A673 (cell line): ENCODE measurements at regions of chr18 and their contacts with region 1.

Region 1: GRCh38 chr18:857986-858385 is 45.9 kb upstream of the YES1 start:
- DNase-seq: no peak
- H3K4me3 ChIP-seq: no peak overlapping the region
- H3K27ac ChIP-seq: no peak overlapping the region
- H3K4me1 ChIP-seq: no peaks in the 10 kb centered on the region
- H3K27me3 ChIP-seq: peaks cover 24% of the 10 kb centered on the region
- CTCF ChIP-seq: no peak

Region 2: DNA sequence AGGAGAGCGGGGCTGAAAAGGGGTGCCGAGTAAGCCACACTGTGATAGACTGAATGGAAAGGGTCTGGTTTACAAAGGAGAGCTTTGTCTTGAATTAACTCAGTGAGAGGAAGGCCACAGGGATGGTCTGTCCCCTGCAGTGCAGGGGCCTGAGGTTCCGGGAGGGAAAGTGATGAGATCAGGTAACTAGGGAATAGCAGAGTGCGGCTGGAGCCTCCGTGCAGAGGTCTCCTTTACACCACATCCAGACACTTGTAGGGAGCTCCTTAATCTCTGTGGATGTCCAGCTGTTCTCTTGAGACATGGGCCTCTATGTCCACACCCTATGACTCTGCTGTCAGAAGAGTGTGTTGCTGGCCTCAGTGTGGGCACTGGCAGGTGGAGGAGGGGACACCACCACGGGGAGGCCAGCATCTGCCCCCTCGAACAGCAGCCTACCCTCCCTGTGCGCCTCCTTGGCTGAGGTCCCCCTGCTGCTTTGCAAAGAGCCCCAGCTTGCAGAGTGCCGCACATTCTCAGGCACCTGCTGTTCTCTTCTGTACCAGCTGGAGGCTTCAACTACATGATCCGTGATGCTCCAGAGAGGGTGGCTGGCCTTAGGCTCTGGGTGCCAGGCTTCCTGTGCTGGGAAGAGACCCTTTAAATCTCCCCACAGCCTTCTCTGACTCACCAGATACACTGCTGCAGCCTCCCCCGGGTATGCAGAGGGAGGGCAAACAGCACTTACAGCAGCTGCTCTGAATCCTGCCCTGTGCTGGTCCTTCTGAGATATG is 171.5 kb before region 1 on chr18:
- CTCF ChIA-PET with region 1: no interaction called
- POLR2A ChIA-PET with region 1: no interaction called
- intact Hi-C with region 1: no loop called
- DNase-seq: no peak
- H3K4me3 ChIP-seq: no peak overlapping the region
- H3K27ac ChIP-seq: no peak overlapping the region
- H3K4me1 ChIP-seq: no peaks in the 10 kb centered on the region
- H3K27me3 ChIP-seq: no peaks in the 10 kb centered on the region
- CTCF ChIP-seq: 0 out of 2 replicates have a peak, but pooled peaks have one; percentile 12

Region 3: DNA sequence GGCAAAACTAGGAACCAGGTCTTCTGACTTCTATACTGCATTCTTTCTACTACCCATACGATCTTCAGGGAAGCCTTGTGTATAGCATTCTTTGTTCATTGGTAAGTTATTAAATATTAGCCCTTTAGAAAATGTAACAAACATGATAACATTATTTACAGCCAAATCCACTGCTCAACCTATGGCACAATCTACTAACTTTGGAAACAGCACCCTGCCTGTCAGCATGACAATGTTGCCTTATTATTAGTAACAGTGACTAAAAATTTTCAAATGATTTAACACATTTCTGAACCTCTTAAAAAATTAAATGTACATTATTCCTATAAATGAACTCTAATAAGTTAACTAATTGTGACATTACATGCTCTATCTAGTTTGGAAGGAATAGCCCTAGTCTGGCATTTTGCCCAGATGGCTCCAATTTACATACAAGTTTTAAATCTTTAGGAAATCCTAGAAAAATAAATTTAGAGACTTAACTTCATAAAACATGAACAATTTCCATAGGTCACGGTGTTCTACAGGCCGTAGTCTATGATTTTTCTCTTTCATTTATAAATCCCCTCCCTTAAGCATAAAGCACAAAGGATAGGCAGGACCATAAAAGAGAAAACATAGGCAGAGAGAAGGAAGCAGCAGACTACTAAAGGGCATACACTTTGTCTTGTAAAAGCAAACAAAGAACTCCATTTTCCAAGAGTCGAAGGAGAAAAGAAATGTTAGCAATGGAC is 79.6 kb before region 1 on chr18:
- CTCF ChIA-PET with region 1: no interaction called
- POLR2A ChIA-PET with region 1: interaction called, 10 read pairs
- intact Hi-C with region 1: no loop called
- DNase-seq: peak; percentile 46
- H3K4me3 ChIP-seq: no peak overlapping the region
- H3K27ac ChIP-seq: peak overlapping the region; percentile 34
- H3K4me1 ChIP-seq: peaks cover 24% of the 10 kb centered on the region
- H3K27me3 ChIP-seq: no peaks in the 10 kb centered on the region
- CTCF ChIP-seq: no peak